Activated CD4-positive, alpha-beta T cell treated with anti-CD3 and anti-CD28 coated beads for 36 hours (primary cell): ENCODE measurements at regions of chr7 and their contacts with region 1.

Region 1: GRCh38 chr7:100896732-100897608 is 1.3 kb upstream of the ACHE start:
- DNase-seq: peak; percentile 74
- ATAC-seq: peak; percentile 48
- H3K4me3 Mint-ChIP-seq: no peak overlapping the region
- H3K27ac Mint-ChIP-seq: no peak overlapping the region
- H3K4me1 Mint-ChIP-seq: peaks cover 9% of the 10 kb centered on the region
- H3K27me3 Mint-ChIP-seq: peaks cover 31% of the 10 kb centered on the region

Region 2: DNA sequence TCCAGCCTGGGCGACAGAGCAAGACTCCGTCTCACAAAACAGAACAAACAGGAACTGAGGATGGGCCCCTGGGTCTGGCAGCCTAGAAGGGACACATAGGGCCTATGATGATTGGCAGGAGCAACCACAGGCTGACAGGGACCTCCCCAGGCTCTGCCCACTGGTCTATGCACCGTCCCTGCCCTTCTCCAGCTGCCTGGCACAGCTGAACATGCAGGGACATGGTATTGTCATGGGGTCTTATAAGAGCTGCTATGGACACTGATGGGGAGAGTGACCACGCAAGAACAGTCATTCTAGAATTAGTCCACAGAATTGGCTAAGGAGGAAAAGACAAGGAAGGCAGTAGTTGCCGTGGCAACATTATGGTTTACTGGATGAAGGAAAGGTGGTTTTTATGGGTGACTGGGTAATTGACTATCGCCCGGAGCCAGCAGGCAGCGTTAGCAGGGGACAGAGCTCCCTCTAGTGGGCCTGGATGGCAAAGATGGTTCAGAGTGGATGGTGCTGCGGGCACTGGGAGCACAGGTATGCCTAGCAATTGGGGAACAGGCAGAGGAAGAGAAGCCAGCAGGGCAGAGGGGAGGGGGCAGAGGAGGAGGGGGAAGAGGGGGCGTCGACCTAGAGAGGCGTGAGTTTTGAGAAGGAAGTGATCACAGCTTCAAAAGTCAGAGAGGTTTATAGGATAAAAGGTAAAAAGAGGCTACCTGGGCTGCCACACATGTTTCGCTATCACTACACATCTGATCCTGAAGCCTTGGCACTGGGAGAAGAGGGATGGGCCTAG is 180.5 kb after region 1 on chr7:
- CTCF ChIA-PET with region 1: interaction called, 9 read pairs
- POLR2A ChIA-PET with region 1: no interaction called
- intact Hi-C with region 1: loop called (anchors 1 kb)
- DNase-seq: peak; percentile 91
- ATAC-seq: peak; percentile 99
- H3K4me3 Mint-ChIP-seq: no peak overlapping the region
- H3K27ac Mint-ChIP-seq: no peak overlapping the region
- H3K4me1 Mint-ChIP-seq: peaks cover 7% of the 10 kb centered on the region
- H3K27me3 Mint-ChIP-seq: peaks cover 3% of the 10 kb centered on the region